Ascending aorta (tissue), 2 donors: ENCODE measurements at regions of chr1 and their contacts with region 1.

Region 1: GRCh38 chr1:179706339-179706941 is 36.7 kb upstream of the FAM163A start:
- DNase-seq: no peak
- H3K4me3 ChIP-seq: no peak overlapping the region
- H3K27ac ChIP-seq: no peak overlapping the region
- H3K4me1 ChIP-seq: no peaks in the 10 kb centered on the region
- H3K27me3 ChIP-seq: no peaks in the 10 kb centered on the region
- CTCF ChIP-seq: peak; percentile 19 to 76 (median 36)

Region 2: DNA sequence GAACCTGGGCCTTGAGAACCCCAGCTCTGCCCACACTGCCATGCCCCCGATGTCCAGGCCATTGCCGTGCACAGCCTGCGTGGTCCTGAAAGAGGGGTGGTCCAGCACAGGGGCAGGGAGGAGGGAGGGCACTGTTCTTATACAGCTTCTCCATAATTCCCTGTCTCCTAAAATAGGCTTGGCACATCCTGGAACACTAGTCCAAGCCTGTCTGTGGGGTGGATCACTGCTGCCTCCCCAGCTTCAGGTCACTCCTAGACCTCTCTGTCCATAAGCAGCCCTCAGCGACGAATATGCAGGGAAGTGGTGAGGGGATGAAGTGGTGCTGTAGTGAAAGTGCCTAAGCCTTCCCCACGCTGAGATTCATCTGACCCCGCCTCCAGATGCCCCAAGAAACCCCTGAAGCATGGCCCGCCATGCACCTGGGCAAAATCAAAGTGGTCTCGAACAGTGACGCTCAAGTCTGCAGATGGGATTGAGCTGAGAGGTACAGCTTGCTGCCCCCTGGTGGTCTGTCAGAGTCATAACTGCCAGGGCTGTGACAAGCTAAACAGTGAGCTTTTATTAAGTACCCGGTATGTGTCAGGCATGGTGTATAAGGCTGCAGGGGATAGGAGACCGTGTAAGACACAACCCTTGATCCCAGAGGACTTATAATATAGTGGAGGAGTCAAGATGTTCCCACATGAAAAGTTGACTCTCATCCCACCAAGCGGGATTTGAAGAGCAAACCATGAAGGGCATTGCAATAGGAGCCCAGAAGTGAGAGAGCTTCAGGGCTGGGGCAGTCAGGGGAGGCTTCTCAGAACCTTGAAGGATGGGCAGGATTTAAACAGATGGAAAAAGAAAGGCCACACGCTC is 103.3 kb after region 1 on chr1:
- intact Hi-C with region 1: loop called (anchors 2 kb)
- DNase-seq: peak in 1 of 2 donors; percentile 71
- H3K4me3 ChIP-seq: no peak overlapping the region
- H3K27ac ChIP-seq: no peak overlapping the region
- H3K4me1 ChIP-seq: peaks cover 0 to 5% of the 10 kb centered on the region in 2 donors
- H3K27me3 ChIP-seq: no peaks in the 10 kb centered on the region
- CTCF ChIP-seq: peak; percentile 71 to 86 (median 80)